ENCODE measurements at regions of chr2 and their contacts with region 1.

Region 1: DNA sequence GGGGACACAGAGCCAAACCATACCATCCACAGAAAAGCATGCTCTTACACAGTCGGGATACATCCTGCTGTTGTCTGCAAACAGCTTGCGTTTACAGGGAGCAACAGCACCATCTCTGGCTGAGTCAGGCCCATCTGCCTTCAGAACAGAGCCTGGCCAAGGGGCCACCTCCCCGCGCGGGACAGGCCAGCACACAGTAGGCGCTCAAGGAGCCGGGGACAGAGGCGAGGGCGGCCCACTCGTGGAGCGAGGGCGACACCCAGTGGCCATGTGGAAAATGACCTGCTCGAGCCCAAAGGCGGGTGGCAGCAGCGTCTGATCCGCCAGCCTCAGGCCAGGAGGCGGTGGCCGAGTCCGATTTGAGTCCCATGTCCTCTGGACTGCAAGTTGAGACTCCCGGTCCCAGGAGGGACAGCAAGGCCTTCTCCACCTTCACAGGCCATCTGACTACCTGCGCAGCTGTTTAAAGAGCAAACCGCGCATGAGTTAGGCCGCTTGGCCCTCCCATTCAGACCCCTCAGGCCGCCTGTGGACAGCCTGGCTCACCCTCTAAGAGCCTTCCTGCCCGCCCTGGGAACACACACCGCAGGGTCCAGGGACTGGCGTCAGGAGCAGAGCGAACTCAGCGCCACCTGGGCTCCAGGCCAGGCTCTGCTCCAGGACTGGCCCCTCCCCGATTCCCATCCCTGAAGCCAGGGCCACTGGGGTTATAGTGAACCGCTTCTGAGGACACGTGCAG is 38.3 kb downstream of the TTC32 start:
- DNase-seq: peak; percentile 73
- H3K4me3 ChIP-seq: peak overlapping the region; percentile 5
- H3K27ac ChIP-seq: no peak overlapping the region
- H3K4me1 ChIP-seq: no peaks in the 10 kb centered on the region
- H3K27me3 ChIP-seq: no peaks in the 10 kb centered on the region
- CTCF ChIP-seq: peak; percentile 95

Region 2: DNA sequence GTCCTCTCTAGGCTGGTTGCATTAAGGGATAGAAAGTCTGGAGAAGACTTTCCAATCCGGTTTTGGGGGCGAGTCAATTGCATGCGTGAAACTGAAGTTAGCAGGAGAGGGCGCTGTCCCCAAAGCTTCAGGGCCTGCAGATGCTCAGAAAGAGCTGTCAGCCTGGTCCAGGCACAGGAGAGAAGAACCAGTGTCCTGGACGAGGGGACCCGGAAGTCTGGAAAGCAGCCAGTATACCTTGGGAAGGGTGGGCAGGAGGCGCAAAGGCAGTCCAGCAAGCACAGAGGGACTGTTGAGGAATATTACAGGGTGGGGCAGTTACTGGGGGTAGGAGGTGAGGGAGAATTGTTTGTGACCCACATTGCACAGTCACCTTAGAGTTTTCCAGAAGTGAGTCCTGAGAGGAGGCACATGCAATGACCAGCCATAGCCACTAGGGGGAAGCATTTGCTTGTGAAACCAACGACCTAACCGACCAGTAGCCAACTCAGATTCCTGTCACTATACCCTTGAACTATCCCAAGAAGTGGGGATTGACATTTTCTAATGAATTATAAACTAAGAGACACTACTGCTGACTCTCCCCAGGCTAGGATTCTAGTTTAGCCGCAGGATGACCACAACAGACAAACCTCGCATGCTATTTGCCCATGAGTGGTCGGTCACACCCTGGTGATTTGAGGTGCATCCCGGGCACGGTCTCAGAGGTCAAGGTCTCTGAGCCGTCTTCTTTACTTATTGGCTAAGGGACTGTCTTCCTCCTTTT is 1475.8 kb before region 1 on chr2:
- intact Hi-C with region 1: loop called (anchors 5 kb)
- DNase-seq: peak; percentile 81
- H3K4me3 ChIP-seq: no peak overlapping the region
- H3K27ac ChIP-seq: no peak overlapping the region
- H3K4me1 ChIP-seq: no peaks in the 10 kb centered on the region
- H3K27me3 ChIP-seq: no peaks in the 10 kb centered on the region
- CTCF ChIP-seq: peak; percentile 90

Region 3: GRCh38 chr2:18435421-18436037 is 1427.9 kb before region 1 on chr2:
- intact Hi-C with region 1: loop called (anchors 10 kb)
- DNase-seq: peak; percentile 42
- H3K4me3 ChIP-seq: no peak overlapping the region
- H3K27ac ChIP-seq: no peak overlapping the region
- H3K4me1 ChIP-seq: no peaks in the 10 kb centered on the region
- H3K27me3 ChIP-seq: no peaks in the 10 kb centered on the region
- CTCF ChIP-seq: peak; percentile 38

Region 4: GRCh38 chr2:18520451-18521425 is 1342.7 kb before region 1 on chr2:
- intact Hi-C with region 1: loop called (anchors 5 kb)
- DNase-seq: peak; percentile 84
- H3K4me3 ChIP-seq: no peak overlapping the region
- H3K27ac ChIP-seq: no peak overlapping the region
- H3K4me1 ChIP-seq: no peaks in the 10 kb centered on the region
- H3K27me3 ChIP-seq: no peaks in the 10 kb centered on the region
- CTCF ChIP-seq: peak; percentile 82

Region 5: DNA sequence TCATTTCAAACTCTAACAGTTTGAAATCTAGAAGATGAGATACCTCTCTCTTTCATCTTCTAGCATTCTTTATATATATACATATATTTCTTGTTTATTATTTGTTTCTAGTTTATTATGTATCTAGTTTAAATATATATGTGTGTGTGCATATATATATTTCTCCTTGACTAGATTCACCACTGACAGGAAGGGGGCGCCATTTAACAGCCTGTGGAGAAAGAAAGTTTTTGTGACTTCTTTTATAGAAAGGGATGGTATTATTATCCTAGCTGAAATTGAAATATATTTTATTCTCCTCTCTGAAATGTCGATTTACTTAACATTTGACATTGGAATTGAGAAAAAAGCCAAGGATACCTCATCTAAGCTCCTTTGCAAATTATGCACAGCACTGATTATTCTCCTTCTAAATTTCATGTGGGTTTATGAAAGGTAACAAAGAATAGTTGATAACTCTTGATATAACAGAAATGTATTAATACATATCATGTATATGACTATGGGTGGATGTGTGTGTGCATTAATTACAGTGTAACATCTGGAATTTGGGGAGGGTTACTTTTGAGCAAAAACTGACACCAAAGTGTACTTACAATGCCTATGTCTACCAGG is 1113.5 kb before region 1 on chr2:
- intact Hi-C with region 1: loop called (anchors 5 kb)
- DNase-seq: peak; percentile 76
- H3K4me3 ChIP-seq: no peak overlapping the region
- H3K27ac ChIP-seq: no peak overlapping the region
- H3K4me1 ChIP-seq: no peaks in the 10 kb centered on the region
- H3K27me3 ChIP-seq: no peaks in the 10 kb centered on the region
- CTCF ChIP-seq: peak; percentile 65

Region 6: DNA sequence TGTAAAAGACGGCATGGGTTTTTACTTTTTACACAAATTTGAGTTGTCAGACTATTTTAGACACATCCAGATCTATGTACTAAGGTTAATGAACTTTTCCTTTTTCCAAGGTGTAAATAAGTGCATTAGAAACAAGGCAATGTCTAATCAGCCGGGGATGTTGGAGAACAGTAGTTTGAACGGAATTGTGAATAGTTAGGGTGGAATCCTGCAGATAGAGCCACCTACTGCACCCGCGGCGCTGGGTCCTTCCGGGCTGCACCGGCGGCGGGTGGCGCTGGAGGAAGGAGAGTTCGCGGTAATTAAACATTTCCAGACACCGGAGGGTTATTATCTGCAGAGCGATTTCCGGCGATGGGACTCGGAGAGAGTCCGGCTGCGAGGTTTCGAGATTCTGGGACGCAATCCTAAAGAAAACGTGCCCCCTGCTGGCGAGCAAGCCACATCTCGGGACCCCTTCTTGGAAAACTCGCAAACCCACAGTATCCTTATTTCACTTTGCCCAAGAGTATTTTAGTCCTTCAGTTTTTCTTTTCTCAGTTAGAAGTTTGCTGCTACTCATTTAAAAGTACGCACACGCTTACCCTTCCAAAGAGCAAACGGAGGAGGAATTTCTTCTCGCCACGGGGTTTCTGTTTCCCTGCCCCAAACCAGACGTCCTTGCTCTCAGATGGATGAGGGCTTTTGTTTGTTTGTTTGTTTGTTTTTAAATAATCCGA is 500.6 kb before region 1 on chr2:
- intact Hi-C with region 1: loop called (anchors 5 kb)
- DNase-seq: peak; percentile 88
- H3K4me3 ChIP-seq: peak overlapping the region; percentile 37
- H3K27ac ChIP-seq: peak overlapping the region; percentile 51
- H3K4me1 ChIP-seq: no peaks in the 10 kb centered on the region
- H3K27me3 ChIP-seq: peaks cover 19% of the 10 kb centered on the region
- CTCF ChIP-seq: peak; percentile 69